Mammary epithelial cell (primary cell): ENCODE measurements at regions of chr2 and their contacts with region 1.

Region 1: GRCh38 chr2:220277445-220278007 is 650.1 kb downstream of the SLC4A3 start:
- DNase-seq: peak; percentile 85
- H3K4me3 ChIP-seq: no peak overlapping the region
- H3K27ac ChIP-seq: peak overlapping the region; percentile 93
- H3K4me1 ChIP-seq: peaks cover 51% of the 10 kb centered on the region
- H3K27me3 ChIP-seq: no peaks in the 10 kb centered on the region
- CTCF ChIP-seq: no peak

Region 2: DNA sequence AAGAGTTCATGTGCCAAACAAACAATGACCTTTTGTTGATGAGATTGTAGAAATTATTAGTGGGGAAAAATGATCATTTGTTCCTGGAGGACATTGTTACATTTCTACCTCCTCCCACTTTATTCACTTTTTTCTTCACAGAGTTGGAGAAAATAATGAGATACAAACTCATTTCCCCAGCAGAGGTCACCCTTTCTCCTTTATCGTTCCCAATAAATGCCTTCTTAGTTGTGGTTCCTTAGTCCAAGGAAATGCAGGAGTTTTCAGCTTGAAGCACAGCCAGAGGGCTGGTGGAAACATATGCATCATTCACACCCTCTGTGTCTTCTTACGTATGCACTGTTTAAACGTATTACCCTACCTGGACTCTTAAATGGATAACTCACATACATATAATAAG is 541.3 kb before region 1 on chr2:
- CTCF ChIA-PET with region 1: no interaction called
- dilution Hi-C with region 1: no loop called
- in situ Hi-C with region 1: no loop called
- intact Hi-C with region 1: loop called (anchors 10 kb)
- DNase-seq: peak; percentile 67
- H3K4me3 ChIP-seq: no peak overlapping the region
- H3K27ac ChIP-seq: no peak overlapping the region
- H3K4me1 ChIP-seq: peaks cover 12% of the 10 kb centered on the region
- H3K27me3 ChIP-seq: no peaks in the 10 kb centered on the region
- CTCF ChIP-seq: peak; percentile 47 to 62

Region 3: GRCh38 chr2:220165401-220165800 is 112.1 kb before region 1 on chr2:
- CTCF ChIA-PET with region 1: no interaction called
- dilution Hi-C with region 1: no loop called
- in situ Hi-C with region 1: no loop called
- intact Hi-C with region 1: no loop called
- DNase-seq: no peak
- H3K4me3 ChIP-seq: no peak overlapping the region
- H3K27ac ChIP-seq: no peak overlapping the region
- H3K4me1 ChIP-seq: no peaks in the 10 kb centered on the region
- H3K27me3 ChIP-seq: no peaks in the 10 kb centered on the region
- CTCF ChIP-seq: no peak

Region 4: DNA sequence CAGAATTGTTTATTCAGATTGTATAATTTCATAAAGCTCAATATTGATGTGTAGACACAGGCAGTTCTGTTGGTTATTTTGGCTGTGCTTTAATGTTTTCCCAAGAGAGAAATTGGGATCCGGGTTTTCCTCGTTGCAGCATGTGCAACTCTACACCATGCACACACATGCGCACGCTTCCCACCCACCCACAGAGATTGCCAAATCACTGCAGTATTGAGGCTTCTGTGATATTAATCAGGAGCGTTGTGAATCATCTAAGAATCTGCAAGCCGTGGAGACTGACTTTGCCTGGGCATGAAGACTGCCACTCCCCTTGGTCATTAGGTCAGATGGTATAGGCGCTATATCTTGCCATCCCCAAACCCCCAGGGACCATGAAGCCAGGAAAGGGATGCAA is 78.6 kb before region 1 on chr2:
- CTCF ChIA-PET with region 1: no interaction called
- dilution Hi-C with region 1: no loop called
- in situ Hi-C with region 1: no loop called
- intact Hi-C with region 1: loop called (anchors 2 kb)
- DNase-seq: peak; percentile 96
- H3K4me3 ChIP-seq: no peak overlapping the region
- H3K27ac ChIP-seq: peak overlapping the region; percentile 26
- H3K4me1 ChIP-seq: peaks cover 26% of the 10 kb centered on the region
- H3K27me3 ChIP-seq: no peaks in the 10 kb centered on the region
- CTCF ChIP-seq: no peak

Region 5: DNA sequence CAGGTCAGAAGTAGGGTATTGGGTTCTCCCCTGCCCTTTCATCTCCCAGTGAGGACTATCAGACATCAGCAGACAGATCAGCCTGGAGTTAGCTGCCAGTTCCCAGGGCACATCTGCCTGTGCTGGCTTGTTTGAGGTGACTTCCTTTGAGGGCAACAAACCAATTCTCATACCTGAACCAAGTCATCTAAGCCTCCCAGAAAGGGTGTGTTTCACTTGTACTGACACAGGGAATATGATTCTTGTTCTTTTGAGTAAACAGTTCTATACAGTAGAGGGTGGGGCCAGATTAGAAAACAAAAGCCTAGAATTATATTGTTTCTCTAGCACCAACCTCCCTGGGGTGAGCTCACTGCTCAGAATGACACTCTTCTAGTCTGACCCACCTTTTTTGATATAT is 58.2 kb before region 1 on chr2:
- CTCF ChIA-PET with region 1: no interaction called
- dilution Hi-C with region 1: no loop called
- in situ Hi-C with region 1: no loop called
- intact Hi-C with region 1: loop called (anchors 2 kb)
- DNase-seq: peak; percentile 96
- H3K4me3 ChIP-seq: no peak overlapping the region
- H3K27ac ChIP-seq: peak overlapping the region; percentile 63
- H3K4me1 ChIP-seq: peaks cover 33% of the 10 kb centered on the region
- H3K27me3 ChIP-seq: no peaks in the 10 kb centered on the region
- CTCF ChIP-seq: no peak

Region 6: GRCh38 chr2:220228299-220229006 is 49.1 kb before region 1 on chr2:
- CTCF ChIA-PET with region 1: no interaction called
- dilution Hi-C with region 1: no loop called
- in situ Hi-C with region 1: no loop called
- intact Hi-C with region 1: loop called (anchors 1 kb)
- DNase-seq: peak; percentile 91
- H3K4me3 ChIP-seq: no peak overlapping the region
- H3K27ac ChIP-seq: peak overlapping the region; percentile 37
- H3K4me1 ChIP-seq: peaks cover 52% of the 10 kb centered on the region
- H3K27me3 ChIP-seq: no peaks in the 10 kb centered on the region
- CTCF ChIP-seq: no peak

Region 7: DNA sequence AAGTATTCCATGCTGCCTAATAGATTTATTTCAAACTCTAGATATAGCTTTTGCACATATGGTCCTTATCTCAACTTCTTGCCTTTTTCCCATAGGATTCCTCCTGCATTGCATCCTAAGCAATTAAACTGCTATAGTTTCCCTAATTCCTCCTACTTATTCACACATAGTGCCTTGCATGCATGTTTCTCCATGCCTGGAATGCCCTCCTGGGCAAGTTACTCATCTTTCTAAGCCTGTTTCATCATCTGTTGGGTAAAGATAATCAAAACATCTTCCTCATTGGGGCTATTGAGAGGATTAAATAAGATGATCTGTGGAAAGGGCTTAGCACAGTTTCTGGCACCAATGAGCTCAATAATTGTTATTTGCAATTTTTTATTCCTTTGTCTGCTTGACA is 76.4 kb after region 1 on chr2:
- CTCF ChIA-PET with region 1: no interaction called
- dilution Hi-C with region 1: no loop called
- in situ Hi-C with region 1: no loop called
- intact Hi-C with region 1: loop called (anchors 1 kb)
- DNase-seq: peak; percentile 75
- H3K4me3 ChIP-seq: no peak overlapping the region
- H3K27ac ChIP-seq: no peak overlapping the region
- H3K4me1 ChIP-seq: peaks cover 23% of the 10 kb centered on the region
- H3K27me3 ChIP-seq: no peaks in the 10 kb centered on the region
- CTCF ChIP-seq: no peak

Region 8: GRCh38 chr2:220512419-220512818 is 234.9 kb after region 1 on chr2:
- CTCF ChIA-PET with region 1: no interaction called
- dilution Hi-C with region 1: no loop called
- in situ Hi-C with region 1: no loop called
- intact Hi-C with region 1: loop called (anchors 5 kb)
- DNase-seq: no peak
- H3K4me3 ChIP-seq: no peak overlapping the region
- H3K27ac ChIP-seq: peak overlapping the region; percentile 16
- H3K4me1 ChIP-seq: peaks cover 32% of the 10 kb centered on the region
- H3K27me3 ChIP-seq: no peaks in the 10 kb centered on the region
- CTCF ChIP-seq: no peak